Activated CD4-positive, alpha-beta T cell treated with anti-CD3 and anti-CD28 coated beads for 36 hours (primary cell): ENCODE measurements at regions of chr9 and their contacts with region 1.

Region 1: DNA sequence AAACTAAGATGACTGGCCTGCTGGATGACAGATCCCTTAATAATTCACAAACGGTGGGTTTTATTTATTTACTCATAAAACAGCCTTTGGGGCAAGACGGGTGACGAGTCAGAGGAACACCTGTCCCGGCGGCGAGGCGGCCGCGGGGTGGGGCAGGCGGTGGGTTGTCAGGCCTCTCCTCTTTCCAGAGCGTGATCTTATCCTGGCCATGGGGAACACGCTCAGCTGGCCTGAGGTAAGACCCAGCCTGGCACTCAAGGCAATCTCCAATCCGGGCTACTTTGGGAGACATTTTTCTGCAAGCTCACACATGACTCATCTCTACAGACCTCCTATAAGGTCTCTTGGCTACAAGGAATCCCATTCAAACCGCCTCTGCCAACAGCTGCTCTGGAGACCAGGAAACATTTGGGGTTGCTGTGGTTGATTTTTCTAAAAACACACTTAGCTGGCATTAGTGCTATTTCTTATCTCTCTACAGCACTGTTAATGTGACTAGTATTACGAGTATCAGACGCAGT is 6.3 kb downstream of the RAPGEF1 start:
- DNase-seq: peak; percentile 70
- ATAC-seq: peak; percentile 9
- H3K4me3 Mint-ChIP-seq: peak overlapping the region; percentile 60
- H3K27ac Mint-ChIP-seq: peak overlapping the region; percentile 89
- H3K4me1 Mint-ChIP-seq: peaks cover 89% of the 10 kb centered on the region
- H3K27me3 Mint-ChIP-seq: no peaks in the 10 kb centered on the region

Region 2: DNA sequence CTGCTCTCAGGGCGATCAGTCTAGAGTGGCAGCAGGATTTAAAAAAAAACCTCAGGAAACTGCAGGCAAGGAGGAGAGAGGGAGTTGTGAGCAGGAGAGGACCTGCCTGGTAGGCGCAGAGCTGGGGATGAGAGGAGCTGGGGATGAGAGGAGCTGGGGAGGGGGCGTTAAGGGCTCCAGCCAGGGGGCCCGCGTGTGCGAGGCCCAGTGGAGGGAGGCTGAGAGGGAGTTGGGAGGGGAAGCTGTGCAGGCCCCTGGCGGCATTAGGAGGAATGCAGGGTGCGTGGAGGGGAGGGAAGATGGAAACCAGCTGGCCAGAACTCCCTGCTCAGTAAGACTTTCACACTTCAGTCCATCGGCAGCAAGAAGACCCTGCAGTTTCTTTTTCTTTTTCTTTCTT is 1513.2 kb before region 1 on chr9:
- CTCF ChIA-PET with region 1: no interaction called
- POLR2A ChIA-PET with region 1: no interaction called
- intact Hi-C with region 1: no loop called
- DNase-seq: no peak
- ATAC-seq: no peak
- H3K4me3 Mint-ChIP-seq: no peak overlapping the region
- H3K27ac Mint-ChIP-seq: no peak overlapping the region
- H3K4me1 Mint-ChIP-seq: no peaks in the 10 kb centered on the region
- H3K27me3 Mint-ChIP-seq: no peaks in the 10 kb centered on the region

Region 3: DNA sequence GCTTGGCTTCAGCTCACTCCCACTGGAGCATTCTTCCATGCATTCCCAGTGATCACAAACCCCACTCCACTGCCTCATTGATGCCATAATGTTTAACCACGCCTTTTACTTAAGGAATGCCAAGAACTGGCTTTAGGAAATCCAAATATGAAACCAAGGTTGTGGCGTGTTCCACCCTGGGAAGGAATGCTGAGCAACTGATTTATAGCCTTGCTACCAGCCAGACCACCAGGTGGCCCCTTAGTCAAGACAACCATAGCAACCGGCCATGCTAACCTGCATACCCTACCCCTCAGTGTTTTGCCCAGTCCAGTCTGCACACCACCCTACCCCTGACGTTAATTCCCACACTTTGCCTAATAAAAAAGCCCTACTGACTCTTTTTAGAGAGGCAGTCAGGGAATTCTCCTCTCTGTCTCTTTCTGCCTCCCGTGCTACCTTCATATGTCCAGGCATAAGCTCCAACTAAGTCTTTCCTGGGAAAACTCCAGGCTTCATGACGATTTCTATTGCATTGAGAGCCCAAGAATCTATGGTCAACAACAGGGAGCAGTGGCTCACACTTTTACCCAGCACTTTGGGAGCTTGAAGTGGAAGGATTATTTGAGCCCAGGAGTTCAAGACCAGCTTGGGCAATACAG is 366.7 kb before region 1 on chr9:
- CTCF ChIA-PET with region 1: no interaction called
- POLR2A ChIA-PET with region 1: no interaction called
- intact Hi-C with region 1: loop called in 1 of 2 experiments (anchors 2 kb)
- DNase-seq: no peak
- ATAC-seq: no peak
- H3K4me3 Mint-ChIP-seq: no peak overlapping the region
- H3K27ac Mint-ChIP-seq: no peak overlapping the region
- H3K4me1 Mint-ChIP-seq: peaks cover under 1% of the 10 kb centered on the region
- H3K27me3 Mint-ChIP-seq: no peaks in the 10 kb centered on the region

Region 4: DNA sequence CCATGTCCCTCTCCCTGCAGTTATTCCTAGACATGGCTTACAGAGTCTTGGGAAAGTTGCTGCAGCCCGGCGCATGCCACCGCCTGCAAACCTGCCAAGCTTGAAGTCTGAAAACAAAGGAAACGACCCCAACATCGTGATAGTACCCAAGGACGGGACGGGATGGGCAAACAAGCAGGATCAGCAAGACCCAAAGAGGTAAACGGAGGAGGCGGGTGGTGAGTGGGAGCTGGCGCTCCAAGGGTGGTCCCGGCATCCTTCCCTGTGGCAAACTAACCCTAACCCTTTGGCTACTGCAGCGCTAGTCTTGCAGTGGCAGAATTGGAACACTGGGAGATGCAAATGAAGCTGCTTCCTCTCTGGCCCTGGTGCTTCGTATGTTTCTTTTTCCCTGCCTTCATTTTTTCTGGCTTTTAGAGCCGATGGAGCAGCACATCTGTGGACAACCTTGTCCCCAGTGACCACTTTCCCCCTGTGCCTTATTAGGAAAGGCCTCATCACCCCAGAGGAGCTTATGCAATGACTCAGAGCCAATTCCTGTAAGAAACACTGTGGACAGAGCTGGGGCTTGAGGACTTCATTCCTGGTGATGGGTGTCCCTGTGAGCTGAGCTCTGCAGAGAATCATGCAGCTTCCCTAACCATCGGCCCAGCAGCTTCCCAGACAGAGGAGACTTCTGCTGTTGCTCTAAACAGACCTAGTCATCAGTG is 300.8 kb before region 1 on chr9:
- CTCF ChIA-PET with region 1: no interaction called
- POLR2A ChIA-PET with region 1: no interaction called
- intact Hi-C with region 1: no loop called
- DNase-seq: no peak
- ATAC-seq: no peak
- H3K4me3 Mint-ChIP-seq: no peak overlapping the region
- H3K27ac Mint-ChIP-seq: no peak overlapping the region
- H3K4me1 Mint-ChIP-seq: peaks cover 20% of the 10 kb centered on the region
- H3K27me3 Mint-ChIP-seq: no peaks in the 10 kb centered on the region

Region 5: DNA sequence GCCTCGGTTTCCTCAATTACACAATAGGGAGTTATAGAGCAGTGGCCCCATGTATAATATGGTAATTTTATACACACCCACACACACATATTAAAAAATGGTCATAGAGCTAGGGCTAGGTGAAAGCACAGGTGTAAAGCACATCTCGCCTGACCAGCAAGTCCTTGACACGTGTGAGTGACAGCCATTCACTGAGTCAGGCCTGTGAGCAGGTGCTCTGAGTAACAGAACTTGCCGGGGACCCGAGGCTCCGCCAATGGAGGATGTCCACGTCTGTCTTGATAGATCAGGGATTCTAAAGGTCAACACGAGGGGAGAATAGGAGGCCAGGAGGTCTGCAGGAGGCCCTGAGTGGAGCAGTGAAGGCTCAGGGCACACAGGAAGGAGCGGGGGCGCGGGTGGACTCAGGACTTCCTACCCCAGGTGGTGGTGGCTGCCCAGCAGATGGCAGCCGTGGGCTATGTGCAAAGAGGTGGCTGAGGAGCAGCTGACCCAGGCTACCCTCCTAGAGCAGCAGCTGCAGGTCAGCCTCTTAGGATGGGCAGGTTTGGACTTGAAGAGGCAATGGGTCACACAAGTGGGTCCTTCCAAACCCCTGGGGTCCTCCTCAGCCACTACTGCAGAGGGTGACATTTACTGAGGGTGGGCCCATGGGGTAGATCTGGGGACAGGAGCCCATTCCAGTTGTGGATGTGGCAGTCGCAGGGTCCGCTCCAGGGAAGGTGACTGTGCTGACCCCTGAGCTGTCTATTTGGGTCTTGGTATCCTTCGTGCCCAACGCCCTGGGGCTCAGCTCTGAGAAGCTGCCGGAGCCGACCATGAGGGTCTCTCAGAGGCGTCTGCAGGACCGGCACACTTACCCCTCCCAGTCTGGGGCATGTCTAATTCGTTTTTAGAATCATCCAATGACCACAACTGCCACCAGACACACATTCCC is 142.4 kb before region 1 on chr9:
- CTCF ChIA-PET with region 1: interaction called, 29 read pairs
- POLR2A ChIA-PET with region 1: interaction called, 3 read pairs
- intact Hi-C with region 1: loop called in 1 of 2 experiments (anchors 2 kb)
- DNase-seq: peak; percentile 90
- ATAC-seq: peak; percentile 94
- H3K4me3 Mint-ChIP-seq: no peak overlapping the region
- H3K27ac Mint-ChIP-seq: peak overlapping the region; percentile 85
- H3K4me1 Mint-ChIP-seq: peaks cover 28% of the 10 kb centered on the region
- H3K27me3 Mint-ChIP-seq: no peaks in the 10 kb centered on the region

Region 6: GRCh38 chr9:131645078-131645776 is 88.4 kb before region 1 on chr9:
- CTCF ChIA-PET with region 1: interaction called, 25 read pairs
- POLR2A ChIA-PET with region 1: interaction called, 4 read pairs
- intact Hi-C with region 1: loop called in 1 of 2 experiments (anchors 2 kb)
- DNase-seq: peak; percentile 54
- ATAC-seq: peak; percentile 65
- H3K4me3 Mint-ChIP-seq: no peak overlapping the region
- H3K27ac Mint-ChIP-seq: peak overlapping the region; percentile 89
- H3K4me1 Mint-ChIP-seq: peaks cover 63% of the 10 kb centered on the region
- H3K27me3 Mint-ChIP-seq: no peaks in the 10 kb centered on the region

Region 7: GRCh38 chr9:131668439-131669268 is 64.9 kb before region 1 on chr9:
- CTCF ChIA-PET with region 1: interaction called, 14 read pairs
- POLR2A ChIA-PET with region 1: interaction called, 7 read pairs
- intact Hi-C with region 1: loop called (anchors 1 kb)
- DNase-seq: peak; percentile 83
- ATAC-seq: peak; percentile 68
- H3K4me3 Mint-ChIP-seq: peak overlapping the region; percentile 54
- H3K27ac Mint-ChIP-seq: peak overlapping the region; percentile 96
- H3K4me1 Mint-ChIP-seq: peaks cover 93% of the 10 kb centered on the region
- H3K27me3 Mint-ChIP-seq: no peaks in the 10 kb centered on the region

Region 8: GRCh38 chr9:131709771-131710454 is 23.7 kb before region 1 on chr9:
- CTCF ChIA-PET with region 1: interaction called, 15 read pairs
- POLR2A ChIA-PET with region 1: interaction called, 19 read pairs
- intact Hi-C with region 1: loop called (anchors 1 kb)
- DNase-seq: peak; percentile 66
- ATAC-seq: peak; percentile 88
- H3K4me3 Mint-ChIP-seq: peak overlapping the region; percentile 53
- H3K27ac Mint-ChIP-seq: peak overlapping the region; percentile 90
- H3K4me1 Mint-ChIP-seq: peaks cover 87% of the 10 kb centered on the region
- H3K27me3 Mint-ChIP-seq: no peaks in the 10 kb centered on the region